Activated naive CD4-positive, alpha-beta T cell treated with anti-CD3 and anti-CD28 coated beads, Interleukin-2, amount 10 ng/mL, durations not matched to agents 7 days and 5 days (primary cell): ENCODE measurements at regions of chr2 and their contacts with region 1.

Region 1: GRCh38 chr2:26745609-26746327 is 18.3 kb upstream of the SLC35F6 start:
- DNase-seq: peak; percentile 88
- H3K4me3 Mint-ChIP-seq: no peak overlapping the region
- H3K27ac Mint-ChIP-seq: no peak overlapping the region
- H3K4me1 Mint-ChIP-seq: peaks cover under 1% of the 10 kb centered on the region
- H3K27me3 Mint-ChIP-seq: peaks cover 25% of the 10 kb centered on the region

Region 2: DNA sequence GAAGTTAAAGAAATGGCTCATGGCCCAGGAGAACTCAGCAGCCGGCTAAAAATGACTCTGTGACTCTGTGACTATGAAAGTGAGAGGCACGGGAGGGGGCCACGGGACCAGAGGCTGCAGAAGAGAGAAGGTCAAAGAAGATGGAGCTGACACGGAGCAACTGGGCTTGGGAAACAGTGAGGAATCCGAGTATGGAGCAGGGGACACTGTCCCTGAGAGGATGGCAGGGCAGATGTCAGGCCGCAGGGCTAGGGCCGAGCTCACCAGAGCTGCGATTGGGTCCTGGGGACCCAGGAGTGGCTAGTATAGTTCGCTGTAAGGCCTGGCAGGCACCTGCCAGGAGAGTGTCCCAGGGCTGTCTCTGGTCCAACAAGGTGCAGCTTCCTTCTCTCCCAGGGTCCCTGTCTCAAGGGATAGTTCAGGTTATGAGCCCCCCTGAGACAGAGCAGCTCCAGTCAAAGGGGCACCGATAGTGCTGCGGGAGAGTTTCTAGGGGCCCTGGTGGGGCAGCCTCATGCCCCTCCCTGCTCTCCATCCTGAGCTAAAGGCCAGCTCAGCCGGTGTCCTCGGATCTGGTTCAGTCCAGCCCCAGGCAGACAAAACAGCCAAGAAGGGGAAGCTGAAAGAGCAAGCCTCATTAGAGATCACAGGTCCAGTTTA is 147.3 kb before region 1 on chr2:
- CTCF ChIA-PET with region 1: interaction called, 160 read pairs
- DNase-seq: no peak
- H3K4me3 Mint-ChIP-seq: no peak overlapping the region
- H3K27ac Mint-ChIP-seq: no peak overlapping the region
- H3K4me1 Mint-ChIP-seq: no peaks in the 10 kb centered on the region
- H3K27me3 Mint-ChIP-seq: peaks cover 38% of the 10 kb centered on the region

Region 3: GRCh38 chr2:26605195-26605998 is 140.4 kb before region 1 on chr2:
- CTCF ChIA-PET with region 1: interaction called, 160 read pairs
- DNase-seq: peak; percentile 57
- H3K4me3 Mint-ChIP-seq: no peak overlapping the region
- H3K27ac Mint-ChIP-seq: no peak overlapping the region
- H3K4me1 Mint-ChIP-seq: peaks cover 11% of the 10 kb centered on the region
- H3K27me3 Mint-ChIP-seq: peaks cover 26% of the 10 kb centered on the region

Region 4: GRCh38 chr2:27123302-27124231 is 377.8 kb after region 1 on chr2 and contains the start of gene ABHD1:
- CTCF ChIA-PET with region 1: no interaction called
- DNase-seq: peak; percentile 76
- H3K4me3 Mint-ChIP-seq: peak within 1 kb of the TSS; percentile 73
- H3K27ac Mint-ChIP-seq: peak within 1 kb of the TSS; percentile 17
- H3K4me1 Mint-ChIP-seq: peaks cover 20% of the 10 kb centered on the region
- H3K27me3 Mint-ChIP-seq: peaks cover 48% of the 10 kb centered on the region